IMR-90 (cell line): ENCODE measurements at regions of chr12 and their contacts with region 1.

Region 1: DNA sequence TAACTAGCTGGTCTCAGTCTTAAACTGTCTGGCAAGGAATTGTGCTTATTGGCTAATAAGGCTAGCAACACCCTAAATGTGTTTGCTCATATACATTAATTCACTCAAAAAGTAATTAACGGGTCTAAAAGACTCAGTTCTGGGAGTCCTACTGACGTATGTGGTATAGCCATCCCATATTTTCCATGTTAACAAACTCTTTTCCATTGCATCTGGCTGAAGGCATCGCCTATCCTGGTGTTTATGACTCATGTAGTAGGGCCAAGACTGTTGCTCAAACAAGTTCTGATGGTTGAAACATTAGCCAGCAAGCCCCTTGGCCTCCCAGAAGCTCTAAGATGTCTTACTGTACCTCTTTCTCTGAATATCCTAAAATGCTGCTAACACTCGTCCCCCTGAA is 98.5 kb downstream of the PHLDA1 start:
- DNase-seq: peak; percentile 96
- ATAC-seq: peak; percentile 74
- H3K4me3 ChIP-seq: no peak overlapping the region
- H3K27ac ChIP-seq: peak overlapping the region; percentile 65; the same call in 1 of the 2 replicates
- H3K4me1 ChIP-seq: peaks cover 19% of the 10 kb centered on the region
- H3K27me3 ChIP-seq: no peaks in the 10 kb centered on the region
- CTCF ChIP-seq: no peak
- POLR2A ChIP-seq: no peak
- RAD21 ChIP-seq: peak; percentile 13; the same call in 1 of the 2 replicates

Region 2: DNA sequence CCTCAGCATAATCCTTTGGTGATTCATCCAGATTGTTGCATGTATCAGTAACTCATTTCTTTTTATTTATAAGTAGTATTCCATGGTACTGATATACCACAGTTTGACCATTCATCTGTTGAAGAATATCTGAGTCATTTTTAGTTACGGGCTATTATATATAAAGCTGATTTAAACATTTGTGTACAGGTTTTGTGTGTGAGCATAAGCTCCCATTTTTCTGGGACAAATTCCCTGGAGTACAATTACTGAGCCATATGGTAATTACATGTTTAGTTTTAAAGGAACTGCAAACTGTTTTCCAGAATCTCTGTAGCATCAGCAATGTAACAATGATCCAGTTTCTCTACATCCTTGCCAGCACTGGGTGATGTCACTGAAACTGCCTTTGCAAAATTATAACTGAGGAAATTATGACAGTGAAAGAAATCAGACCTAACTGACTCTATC is 185.5 kb before region 1 on chr12:
- CTCF ChIA-PET with region 1: no interaction called
- POLR2A ChIA-PET with region 1: interaction called, 11 read pairs
- dilution Hi-C with region 1: no loop called
- in situ Hi-C with region 1: no loop called
- intact Hi-C with region 1: no loop called
- DNase-seq: peak; percentile 92
- ATAC-seq: peak; percentile 70
- H3K4me3 ChIP-seq: no peak overlapping the region
- H3K27ac ChIP-seq: peak overlapping the region; percentile 88
- H3K4me1 ChIP-seq: peaks cover 14% of the 10 kb centered on the region
- H3K27me3 ChIP-seq: no peaks in the 10 kb centered on the region
- CTCF ChIP-seq: no peak
- POLR2A ChIP-seq: no peak
- RAD21 ChIP-seq: no peak

Region 3: GRCh38 chr12:75820848-75821578 is 112.1 kb before region 1 on chr12:
- CTCF ChIA-PET with region 1: no interaction called
- POLR2A ChIA-PET with region 1: no interaction called
- dilution Hi-C with region 1: no loop called
- in situ Hi-C with region 1: no loop called
- intact Hi-C with region 1: loop called (anchors 5 kb)
- DNase-seq: peak; percentile 97
- ATAC-seq: peak; percentile 71
- H3K4me3 ChIP-seq: no peak overlapping the region; the same call in 1 of the 2 replicates
- H3K27ac ChIP-seq: peak overlapping the region; percentile 40
- H3K4me1 ChIP-seq: peaks cover 33% of the 10 kb centered on the region
- H3K27me3 ChIP-seq: no peaks in the 10 kb centered on the region
- CTCF ChIP-seq: peak; percentile 18; the same call in 1 of the 2 replicates
- POLR2A ChIP-seq: no peak
- RAD21 ChIP-seq: 0 out of 2 replicates have a peak, but pooled peaks have one; percentile 20

Region 4: GRCh38 chr12:75883241-75883640 is 49.9 kb before region 1 on chr12:
- CTCF ChIA-PET with region 1: no interaction called
- POLR2A ChIA-PET with region 1: interaction called, 3 read pairs
- dilution Hi-C with region 1: no loop called
- in situ Hi-C with region 1: no loop called
- intact Hi-C with region 1: loop called (anchors 5 kb)
- DNase-seq: no peak
- ATAC-seq: no peak
- H3K4me3 ChIP-seq: no peak overlapping the region
- H3K27ac ChIP-seq: no peak overlapping the region
- H3K4me1 ChIP-seq: no peaks in the 10 kb centered on the region
- H3K27me3 ChIP-seq: no peaks in the 10 kb centered on the region
- CTCF ChIP-seq: no peak
- POLR2A ChIP-seq: no peak
- RAD21 ChIP-seq: no peak